ENCODE measurements at regions of chr9 and their contacts with region 1.

Region 1: DNA sequence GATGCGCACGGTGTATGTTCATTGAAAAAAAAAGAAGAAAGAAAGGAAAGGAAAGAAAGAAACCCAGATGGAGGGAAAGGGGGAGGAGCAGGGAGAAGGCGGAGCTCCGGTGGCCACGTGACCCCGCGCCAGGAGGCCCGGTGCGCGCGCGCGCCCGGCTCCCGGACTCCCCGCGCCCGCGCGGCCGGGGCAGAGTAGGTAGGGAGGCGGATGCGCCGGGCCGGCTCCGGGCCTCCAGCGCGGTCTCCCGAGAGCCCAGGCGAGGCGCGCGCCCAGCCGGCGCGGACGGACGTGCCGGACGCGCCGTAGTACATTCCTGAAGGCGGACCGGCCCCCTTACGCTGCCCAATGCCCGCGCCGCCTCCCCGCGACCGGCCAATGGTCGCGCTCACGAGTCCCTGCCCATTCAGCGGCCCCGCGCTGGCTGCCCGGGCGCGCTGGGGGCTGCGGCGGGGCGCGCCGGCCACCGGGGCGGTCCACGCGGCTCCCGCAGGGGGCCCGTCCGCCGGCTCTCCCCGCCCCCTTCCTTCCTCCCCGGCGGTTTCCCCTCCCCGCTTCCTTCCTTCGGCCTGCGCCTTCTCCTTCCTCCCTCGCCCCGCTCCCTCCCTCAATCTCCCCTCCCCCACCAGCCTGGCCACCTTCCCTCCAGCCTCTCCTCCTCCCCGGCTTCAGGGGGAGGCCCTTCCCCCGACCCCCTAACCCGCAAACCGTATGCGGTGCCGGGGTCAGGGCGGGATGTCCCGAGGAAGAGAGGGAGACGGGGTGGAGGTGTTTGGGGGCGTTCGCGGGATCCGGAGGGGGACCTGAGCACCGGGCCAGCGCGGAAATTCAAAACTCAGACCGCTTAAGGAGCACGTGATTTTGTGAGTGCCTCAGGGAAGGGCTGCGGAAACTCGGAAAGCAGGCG is 5.8 kb downstream of the PTCH1 start:
- DNase-seq: peak; percentile 90
- H3K4me3 Mint-ChIP-seq: peak overlapping the region; percentile 91
- H3K27ac Mint-ChIP-seq: peak overlapping the region; percentile 90
- H3K4me1 Mint-ChIP-seq: peaks cover 25% of the 10 kb centered on the region
- H3K27me3 Mint-ChIP-seq: peaks cover 10% of the 10 kb centered on the region

Region 2: DNA sequence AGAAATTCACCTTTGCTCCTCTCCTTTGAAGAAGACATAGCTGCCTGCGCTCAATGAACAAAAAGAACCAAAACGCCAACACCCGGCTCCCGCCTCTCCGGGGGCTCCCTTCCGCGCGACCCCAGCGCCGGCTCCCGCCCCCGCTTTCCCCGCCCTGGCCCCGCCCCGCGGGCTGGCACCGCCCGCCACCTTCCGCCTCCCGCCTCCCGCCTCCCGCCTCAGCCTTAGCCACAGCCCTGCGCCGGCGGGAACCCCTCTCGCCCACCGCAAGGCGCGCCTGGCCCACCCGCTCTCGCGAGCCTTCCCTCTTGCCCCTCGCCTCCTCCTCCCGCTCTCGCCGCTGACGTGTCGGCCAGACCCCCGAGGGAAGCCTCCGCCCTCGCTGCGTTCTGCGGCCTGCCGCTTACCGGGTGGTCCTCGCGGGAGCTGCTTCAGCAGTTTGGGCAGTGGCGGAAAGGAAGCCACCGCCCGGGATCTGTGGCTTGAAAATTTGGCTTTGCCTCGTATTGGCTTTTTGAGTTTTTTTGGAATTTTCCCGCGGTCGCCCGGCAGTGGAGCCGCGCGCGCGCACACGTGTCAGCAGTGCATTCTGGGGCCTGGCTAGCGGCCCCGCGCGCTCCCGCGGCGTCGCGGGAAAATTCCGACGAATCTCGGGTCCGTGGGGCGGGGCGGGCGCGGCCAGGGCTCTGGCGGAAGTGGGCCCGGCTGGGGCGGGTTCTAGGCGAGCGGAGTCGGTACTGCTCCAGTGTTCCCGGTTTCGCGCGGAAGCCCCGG is 193.7 kb before region 1 on chr9 and contains the start of gene FANCC:
- CTCF ChIA-PET with region 1: no interaction called
- intact Hi-C with region 1: loop called (anchors 2 kb)
- DNase-seq: peak; percentile 85
- H3K4me3 Mint-ChIP-seq: peak within 1 kb of the TSS; percentile 91
- H3K27ac Mint-ChIP-seq: peak within 1 kb of the TSS; percentile 93
- H3K4me1 Mint-ChIP-seq: peaks cover 18% of the 10 kb centered on the region
- H3K27me3 Mint-ChIP-seq: peaks cover 6% of the 10 kb centered on the region
- total RNA-seq, gene FANCC: 14.1 to 14.5 TPM

Region 3: DNA sequence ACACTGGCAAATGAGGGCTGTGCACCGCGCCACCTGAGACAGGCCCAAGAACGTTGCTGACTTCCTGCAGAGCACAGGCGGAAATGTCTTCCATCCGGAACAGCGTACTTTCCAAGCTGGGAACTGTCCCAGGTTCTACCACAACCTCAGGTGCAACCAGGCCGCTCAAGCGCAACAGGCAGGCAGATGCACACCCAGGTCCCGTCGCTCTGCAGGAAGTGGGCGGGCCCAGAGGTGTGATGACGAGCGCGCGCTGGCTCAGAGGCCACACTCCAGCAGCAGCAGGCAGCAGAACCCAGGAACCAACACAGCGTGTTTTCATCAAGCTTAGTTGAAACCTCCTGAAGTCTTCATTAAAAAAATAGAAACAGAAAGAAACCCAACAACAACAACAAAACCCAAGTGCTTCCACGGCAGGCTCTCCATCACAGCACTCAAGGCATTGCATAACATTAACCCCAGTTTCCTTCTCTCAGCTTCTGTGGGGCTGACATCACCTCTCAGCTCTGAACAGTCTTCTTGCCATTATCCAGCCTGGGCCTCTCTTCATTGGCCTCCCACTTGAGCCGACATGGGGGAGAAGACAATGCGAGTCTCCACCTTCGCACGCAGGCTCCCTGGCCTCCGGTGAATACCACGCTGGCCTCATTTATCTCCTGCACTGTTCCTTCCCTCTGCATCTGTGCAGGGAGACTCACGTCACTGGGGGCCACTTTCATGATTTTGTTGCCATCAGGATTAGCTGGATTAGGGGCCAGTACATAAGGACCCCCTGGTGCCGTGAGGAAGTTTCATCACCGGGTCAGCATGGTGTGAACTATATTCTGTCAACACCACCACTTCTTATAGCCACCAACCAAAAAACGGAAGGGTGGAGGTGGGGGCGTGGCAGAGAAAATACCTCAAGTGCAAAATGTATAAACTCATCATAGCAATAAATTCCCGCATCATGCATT is 16.3 kb before region 1 on chr9:
- CTCF ChIA-PET with region 1: interaction called, 3 read pairs
- intact Hi-C with region 1: loop called (anchors 1 kb)
- DNase-seq: peak; percentile 92
- H3K4me3 Mint-ChIP-seq: peak overlapping the region; percentile 75
- H3K27ac Mint-ChIP-seq: peak overlapping the region; percentile 90
- H3K4me1 Mint-ChIP-seq: peaks cover 49% of the 10 kb centered on the region
- H3K27me3 Mint-ChIP-seq: no peaks in the 10 kb centered on the region

Region 4: DNA sequence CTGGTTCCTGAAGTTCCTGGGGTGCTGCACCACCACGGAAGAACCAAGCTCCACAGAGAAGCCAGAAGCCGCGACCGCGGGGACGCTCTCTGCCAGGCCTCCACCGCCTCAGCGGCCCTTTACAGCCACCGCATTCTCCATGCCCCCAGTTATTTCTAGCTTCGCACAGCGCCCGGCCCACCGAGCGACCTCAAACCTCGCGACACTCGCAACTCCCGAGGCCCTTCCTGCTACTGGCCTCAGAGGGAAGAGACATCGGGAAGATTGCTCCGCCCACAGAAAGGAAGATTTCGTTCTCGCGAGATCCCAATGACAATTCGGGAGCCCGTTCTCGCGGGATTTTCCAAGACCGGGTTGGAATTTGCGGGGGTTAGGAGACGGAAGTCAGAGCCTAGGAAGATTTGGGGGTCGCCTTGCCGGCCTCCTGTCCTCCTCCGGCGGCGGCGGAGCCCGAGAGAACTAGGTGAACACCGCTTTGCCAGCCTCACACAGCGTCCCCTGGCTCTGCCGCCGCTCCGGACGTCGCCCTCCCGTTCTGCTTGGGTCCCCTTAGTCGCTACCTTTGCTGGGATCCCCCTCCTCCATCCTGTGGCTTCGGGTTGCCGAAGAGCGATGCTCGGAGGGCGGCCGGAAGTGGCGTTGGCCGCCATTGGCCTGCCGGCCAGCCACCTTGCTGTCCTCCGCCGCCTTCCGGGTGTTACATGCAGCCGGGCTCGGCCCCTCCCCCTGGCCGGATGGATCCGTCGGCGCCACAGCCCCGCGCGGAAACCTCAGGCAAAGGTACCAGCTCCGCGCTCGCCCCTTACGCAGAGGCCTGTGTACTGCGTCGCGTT is 364.6 kb after region 1 on chr9 and contains the start of gene ERCC6L2:
- CTCF ChIA-PET with region 1: no interaction called
- intact Hi-C with region 1: loop called (anchors 2 kb)
- DNase-seq: peak; percentile 96
- H3K4me3 Mint-ChIP-seq: no peak within 1 kb of the TSS
- H3K27ac Mint-ChIP-seq: no peak within 1 kb of the TSS
- H3K4me1 Mint-ChIP-seq: peaks cover 24% of the 10 kb centered on the region
- H3K27me3 Mint-ChIP-seq: no peaks in the 10 kb centered on the region
- total RNA-seq, gene ERCC6L2: 20.3 to 20.6 TPM

Region 5: GRCh38 chr9:96217754-96218693 is 707.1 kb after region 1 on chr9:
- CTCF ChIA-PET with region 1: no interaction called
- intact Hi-C with region 1: loop called (anchors 5 kb)
- DNase-seq: peak; percentile 73
- H3K4me3 Mint-ChIP-seq: peak overlapping the region; percentile 57
- H3K27ac Mint-ChIP-seq: no peak overlapping the region
- H3K4me1 Mint-ChIP-seq: peaks cover 7% of the 10 kb centered on the region
- H3K27me3 Mint-ChIP-seq: peaks cover 49% of the 10 kb centered on the region